AG04449 (cell line): ENCODE measurements at regions of chr2 and their contacts with region 1.

Region 1: GRCh38 chr2:174697255-174697654 is 67.0 kb downstream of the CHRNA1 start:
- DNase-seq: no peak
- H3K4me3 ChIP-seq: no peak overlapping the region
- CTCF ChIP-seq: peak; percentile 87

Region 2: GRCh38 chr2:174623690-174624089 is 73.6 kb before region 1 on chr2:
- CTCF ChIA-PET with region 1: no interaction called
- POLR2A ChIA-PET with region 1: no interaction called
- DNase-seq: no peak
- H3K4me3 ChIP-seq: no peak overlapping the region
- CTCF ChIP-seq: no peak

Region 3: DNA sequence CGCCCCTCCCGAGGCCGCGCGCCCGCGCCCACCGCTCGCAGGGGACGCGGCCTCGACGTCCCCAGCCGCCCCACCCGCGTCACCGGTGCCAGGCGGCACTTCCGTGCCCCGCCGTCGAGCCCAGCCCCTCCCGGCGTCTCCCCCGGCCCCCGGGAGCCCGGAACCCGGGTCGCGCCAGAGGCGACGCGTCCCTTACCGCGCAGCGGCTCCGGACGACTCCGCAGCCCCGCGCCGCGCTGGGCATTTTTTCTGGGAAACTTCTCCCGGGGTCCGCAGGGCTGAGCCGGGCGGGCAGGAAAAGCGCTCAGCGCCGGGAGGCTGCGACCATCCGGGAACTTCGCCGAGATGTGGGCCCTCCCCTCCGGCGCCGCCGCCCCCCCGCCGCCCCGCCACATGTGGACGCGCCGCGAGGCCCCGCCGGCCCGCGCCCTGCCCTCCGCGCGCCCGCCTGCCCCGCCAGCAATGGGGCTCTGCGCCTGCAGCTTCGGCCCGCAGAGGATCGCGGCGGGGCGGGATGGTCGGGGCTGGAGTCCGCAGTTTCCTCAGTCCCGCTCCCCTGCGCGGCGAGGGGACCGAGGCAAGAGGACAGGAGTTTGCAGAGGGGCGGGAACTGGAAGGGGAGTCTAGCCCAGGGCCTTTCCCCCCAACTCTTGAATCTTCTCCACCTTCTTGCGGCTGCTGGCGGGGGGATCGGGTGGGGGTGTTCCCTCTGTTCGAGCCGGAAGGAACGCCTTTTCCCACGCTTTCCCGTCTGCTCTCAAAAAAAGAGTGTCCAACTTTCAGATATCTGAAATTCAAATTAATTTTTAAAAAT is 14.5 kb before region 1 on chr2:
- CTCF ChIA-PET with region 1: interaction called, 217 read pairs
- POLR2A ChIA-PET with region 1: interaction called, 4 read pairs
- DNase-seq: no peak
- H3K4me3 ChIP-seq: peak overlapping the region; percentile 80
- CTCF ChIP-seq: no peak

Region 4: DNA sequence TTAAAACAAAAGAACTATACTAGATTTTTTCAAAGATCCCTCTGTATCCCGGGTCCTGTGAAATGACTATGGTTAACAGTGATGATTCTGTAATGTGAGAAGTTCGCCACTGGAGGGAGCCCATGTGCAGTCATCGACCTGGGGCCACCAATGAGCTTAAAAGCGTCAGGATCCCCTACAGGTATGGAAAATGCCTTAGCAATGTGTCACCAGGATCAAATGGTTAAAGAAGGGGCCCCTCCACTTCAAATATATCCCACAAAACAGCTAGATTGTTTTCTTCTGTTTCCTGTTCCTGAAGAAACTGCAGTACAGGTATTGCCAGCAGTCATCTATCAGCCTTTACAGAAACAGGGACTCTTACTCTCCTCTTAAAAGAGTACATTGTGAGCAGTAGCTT is 51.7 kb after region 1 on chr2:
- CTCF ChIA-PET with region 1: interaction called, 21 read pairs
- POLR2A ChIA-PET with region 1: no interaction called
- DNase-seq: no peak
- H3K4me3 ChIP-seq: no peak overlapping the region
- CTCF ChIP-seq: peak; percentile 72

Region 5: DNA sequence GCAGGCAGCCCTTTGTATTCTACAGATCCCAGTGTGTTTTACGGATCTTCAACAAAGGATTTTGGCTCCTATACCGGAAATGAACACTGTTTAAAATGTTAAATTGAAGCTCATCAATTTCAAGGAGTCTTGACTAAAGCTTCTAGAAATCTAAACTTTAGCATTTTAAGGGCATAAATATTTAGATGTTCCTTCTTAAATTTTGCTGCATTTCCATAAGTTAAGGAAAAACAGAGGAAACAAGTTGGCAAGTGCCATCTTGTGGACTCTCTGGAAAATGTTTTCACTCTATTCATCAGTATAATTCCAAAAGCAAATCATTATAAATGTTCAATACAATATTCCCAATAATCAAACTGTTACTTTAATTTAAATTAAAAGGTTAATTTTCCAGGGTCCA is 288.4 kb after region 1 on chr2:
- CTCF ChIA-PET with region 1: interaction called, 109 read pairs
- POLR2A ChIA-PET with region 1: no interaction called
- DNase-seq: no peak
- H3K4me3 ChIP-seq: no peak overlapping the region
- CTCF ChIP-seq: peak; percentile 39

Region 6: DNA sequence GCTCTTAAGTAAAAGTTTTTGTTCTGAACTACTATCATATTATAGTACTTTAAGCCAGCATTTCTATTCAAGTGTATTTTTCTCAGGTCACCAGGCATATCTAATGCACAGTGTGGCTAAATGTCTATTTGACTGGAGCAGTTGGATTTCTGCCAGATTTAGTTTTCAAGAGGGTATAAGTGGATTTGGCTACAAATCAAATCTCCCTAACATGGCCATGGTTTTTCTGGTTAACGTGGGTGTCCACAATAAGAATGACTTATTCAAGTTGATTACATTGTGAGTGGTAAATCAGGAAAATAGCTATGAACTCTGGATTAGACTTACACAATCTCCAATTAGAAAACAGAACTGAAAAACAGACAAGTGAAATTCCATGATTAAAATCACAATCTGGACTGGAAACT is 313.6 kb after region 1 on chr2:
- CTCF ChIA-PET with region 1: interaction called, 21 read pairs
- POLR2A ChIA-PET with region 1: no interaction called
- DNase-seq: no peak
- H3K4me3 ChIP-seq: no peak overlapping the region
- CTCF ChIP-seq: no peak

Region 7: DNA sequence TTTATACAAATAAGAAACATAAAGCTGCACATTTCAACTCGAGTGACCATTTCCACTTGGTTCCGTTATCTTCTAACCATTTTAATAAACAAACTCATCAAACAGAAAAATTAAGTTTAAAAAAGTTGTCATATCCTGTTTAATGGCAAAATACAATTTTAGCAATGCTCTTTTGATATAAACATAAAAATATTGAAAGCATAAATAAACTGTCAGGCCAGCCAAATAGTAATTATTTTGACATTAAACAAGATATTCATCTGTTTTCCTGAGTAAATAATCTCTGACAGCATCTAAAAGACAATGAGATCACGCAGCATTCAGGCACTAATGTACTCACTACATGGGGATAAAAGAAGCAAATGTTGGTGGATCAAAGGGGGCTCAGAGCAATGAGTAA is 629.5 kb after region 1 on chr2:
- CTCF ChIA-PET with region 1: interaction called, 49 read pairs
- POLR2A ChIA-PET with region 1: no interaction called
- DNase-seq: no peak
- H3K4me3 ChIP-seq: no peak overlapping the region
- CTCF ChIP-seq: no peak